ENCODE measurements at regions of chr11 and their contacts with region 1.

Region 1: GRCh38 chr11:59197991-59198390 is 14.7 kb downstream of the MPEG1 start:
- DNase-seq: no peak
- ATAC-seq: no peak
- H3K4me3 ChIP-seq: no peak overlapping the region
- H3K4me3 Mint-ChIP-seq: no peak overlapping the region
- H3K27ac ChIP-seq: no peak overlapping the region
- H3K27ac Mint-ChIP-seq: no peak overlapping the region
- H3K4me1 ChIP-seq: no peaks in the 10 kb centered on the region
- H3K4me1 Mint-ChIP-seq: peaks cover 6% of the 10 kb centered on the region
- H3K27me3 ChIP-seq: no peaks in the 10 kb centered on the region
- H3K27me3 Mint-ChIP-seq: no peaks in the 10 kb centered on the region
- CTCF ChIP-seq: no peak

Region 2: DNA sequence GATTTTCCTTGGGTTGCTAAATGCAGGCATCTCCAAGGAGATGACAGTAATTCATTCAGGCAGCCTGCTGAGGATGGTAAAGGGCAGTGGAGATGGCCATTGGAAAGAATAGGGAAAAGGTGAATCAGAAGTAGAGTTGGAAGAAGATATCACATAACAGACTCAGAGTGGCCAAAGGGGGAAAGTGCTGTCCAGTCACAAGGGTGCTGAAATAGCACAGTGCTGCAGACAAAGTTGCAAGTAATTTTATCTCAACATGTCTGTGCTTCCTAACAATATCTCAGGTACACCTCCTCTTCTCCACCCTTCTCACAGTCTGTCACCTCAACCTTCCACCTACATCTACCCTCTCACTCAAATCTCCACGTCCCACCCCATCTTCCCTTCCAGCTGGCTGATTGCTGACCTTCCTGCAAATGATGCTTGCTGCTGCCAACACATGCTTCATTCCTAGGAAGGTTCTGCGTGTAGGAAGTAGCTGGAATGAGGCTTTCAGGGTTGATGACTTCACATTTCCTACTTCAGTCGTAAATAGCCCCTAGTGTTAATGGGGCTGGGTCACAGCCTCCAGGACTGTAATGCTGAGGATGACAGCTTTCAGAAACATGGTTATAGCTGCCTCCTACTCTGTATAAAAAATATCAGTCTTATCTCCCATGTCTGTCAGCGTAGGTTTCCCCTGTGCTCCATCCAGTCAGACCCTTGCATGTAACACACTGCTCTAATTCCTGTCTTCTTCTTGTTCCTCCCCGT is 1312.5 kb before region 1 on chr11:
- CTCF ChIA-PET with region 1: no interaction called
- POLR2A ChIA-PET with region 1: no interaction called
- intact Hi-C with region 1: no loop called
- DNase-seq: peak in 1 of 9 experiments; percentile 5
- ATAC-seq: no peak
- H3K4me3 ChIP-seq: no peak overlapping the region
- H3K4me3 Mint-ChIP-seq: no peak overlapping the region
- H3K27ac ChIP-seq: no peak overlapping the region
- H3K27ac Mint-ChIP-seq: no peak overlapping the region
- H3K4me1 ChIP-seq: peaks cover 9% of the 10 kb centered on the region
- H3K4me1 Mint-ChIP-seq: peaks cover 15% of the 10 kb centered on the region
- H3K27me3 ChIP-seq: no peaks in the 10 kb centered on the region
- H3K27me3 Mint-ChIP-seq: peaks cover 2% of the 10 kb centered on the region
- CTCF ChIP-seq: no peak

Region 3: GRCh38 chr11:59062602-59063529 is 135.1 kb before region 1 on chr11:
- CTCF ChIA-PET with region 1: no interaction called
- POLR2A ChIA-PET with region 1: no interaction called
- intact Hi-C with region 1: no loop called
- DNase-seq: no peak
- ATAC-seq: no peak
- H3K4me3 ChIP-seq: no peak overlapping the region
- H3K4me3 Mint-ChIP-seq: no peak overlapping the region
- H3K27ac ChIP-seq: no peak overlapping the region
- H3K27ac Mint-ChIP-seq: no peak overlapping the region
- H3K4me1 ChIP-seq: no peaks in the 10 kb centered on the region
- H3K4me1 Mint-ChIP-seq: peaks cover 10% of the 10 kb centered on the region
- H3K27me3 ChIP-seq: peaks cover 0 to 6% of the 10 kb centered on the region in 2 experiments
- H3K27me3 Mint-ChIP-seq: peaks cover 52% of the 10 kb centered on the region
- CTCF ChIP-seq: no peak

Region 4: DNA sequence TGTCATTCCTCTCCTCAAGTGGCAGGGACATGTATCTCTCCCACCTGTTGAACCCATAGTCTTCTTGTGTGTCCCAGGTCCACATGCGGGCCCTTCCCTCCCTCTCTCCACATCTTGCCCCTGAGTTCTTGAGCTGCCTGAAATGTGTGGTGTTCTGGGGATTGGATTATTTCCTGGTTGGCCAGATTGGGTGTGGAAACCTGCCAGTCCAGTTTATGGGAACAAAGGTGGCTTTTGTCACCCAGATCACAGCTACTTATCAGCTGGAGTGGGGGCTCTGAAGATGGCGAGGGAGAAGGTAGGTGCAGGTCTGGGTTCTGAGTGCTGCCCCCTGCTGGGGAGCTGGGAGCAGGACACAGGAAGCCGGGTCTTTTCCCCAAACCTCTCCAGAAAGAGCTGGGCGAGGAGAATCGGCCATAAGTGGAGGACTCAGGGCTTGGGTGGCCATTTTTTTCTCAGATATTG is 11.8 kb before region 1 on chr11:
- CTCF ChIA-PET with region 1: interaction called, 20 read pairs
- POLR2A ChIA-PET with region 1: no interaction called
- intact Hi-C with region 1: no loop called
- DNase-seq: peak in 8 of 9 experiments; percentile 19 to 68 (median 56)
- ATAC-seq: peak; percentile 78
- H3K4me3 ChIP-seq: no peak overlapping the region
- H3K4me3 Mint-ChIP-seq: no peak overlapping the region
- H3K27ac ChIP-seq: no peak overlapping the region
- H3K27ac Mint-ChIP-seq: no peak overlapping the region
- H3K4me1 ChIP-seq: no peaks in the 10 kb centered on the region
- H3K4me1 Mint-ChIP-seq: peaks cover 2% of the 10 kb centered on the region
- H3K27me3 ChIP-seq: no peaks in the 10 kb centered on the region
- H3K27me3 Mint-ChIP-seq: peaks cover 3% of the 10 kb centered on the region
- CTCF ChIP-seq: peak; percentile 65

Region 5: GRCh38 chr11:59226396-59226795 is 28.4 kb after region 1 on chr11:
- CTCF ChIA-PET with region 1: no interaction called
- POLR2A ChIA-PET with region 1: no interaction called
- intact Hi-C with region 1: no loop called
- DNase-seq: no peak
- ATAC-seq: no peak
- H3K4me3 ChIP-seq: no peak overlapping the region
- H3K4me3 Mint-ChIP-seq: no peak overlapping the region
- H3K27ac ChIP-seq: no peak overlapping the region
- H3K27ac Mint-ChIP-seq: no peak overlapping the region
- H3K4me1 ChIP-seq: no peaks in the 10 kb centered on the region
- H3K4me1 Mint-ChIP-seq: no peaks in the 10 kb centered on the region
- H3K27me3 ChIP-seq: no peaks in the 10 kb centered on the region
- H3K27me3 Mint-ChIP-seq: peaks cover 8% of the 10 kb centered on the region
- CTCF ChIP-seq: no peak

Region 6: DNA sequence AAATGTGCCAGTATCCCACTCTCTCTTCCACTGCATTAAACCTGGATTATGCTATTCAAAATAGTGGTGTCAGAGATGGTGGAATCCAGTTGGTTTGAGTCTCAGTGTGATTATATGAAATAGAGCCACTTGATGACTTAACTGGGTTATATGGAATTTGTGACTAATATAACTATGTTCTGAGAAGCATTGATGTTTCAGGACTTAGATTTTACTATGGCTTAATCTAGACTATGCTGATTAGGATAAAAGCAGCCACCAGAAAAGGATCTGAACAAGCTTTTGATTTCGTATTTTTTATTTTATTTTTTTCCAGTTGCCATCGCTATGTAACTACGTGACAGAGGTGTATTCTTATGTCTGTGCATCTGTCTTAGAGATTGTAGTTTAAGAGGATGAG is 945.8 kb after region 1 on chr11:
- CTCF ChIA-PET with region 1: no interaction called
- POLR2A ChIA-PET with region 1: no interaction called
- intact Hi-C with region 1: no loop called
- DNase-seq: no peak
- ATAC-seq: no peak
- H3K4me3 ChIP-seq: no peak overlapping the region
- H3K4me3 Mint-ChIP-seq: no peak overlapping the region
- H3K27ac ChIP-seq: no peak overlapping the region
- H3K27ac Mint-ChIP-seq: no peak overlapping the region
- H3K4me1 ChIP-seq: no peaks in the 10 kb centered on the region
- H3K4me1 Mint-ChIP-seq: no peaks in the 10 kb centered on the region
- H3K27me3 ChIP-seq: no peaks in the 10 kb centered on the region
- H3K27me3 Mint-ChIP-seq: no peaks in the 10 kb centered on the region
- CTCF ChIP-seq: no peak

Measured in CD8-positive, alpha-beta T cell (primary cell).